T-cell (primary cell): ENCODE measurements at regions of chr14 and their contacts with region 1.

Region 1: DNA sequence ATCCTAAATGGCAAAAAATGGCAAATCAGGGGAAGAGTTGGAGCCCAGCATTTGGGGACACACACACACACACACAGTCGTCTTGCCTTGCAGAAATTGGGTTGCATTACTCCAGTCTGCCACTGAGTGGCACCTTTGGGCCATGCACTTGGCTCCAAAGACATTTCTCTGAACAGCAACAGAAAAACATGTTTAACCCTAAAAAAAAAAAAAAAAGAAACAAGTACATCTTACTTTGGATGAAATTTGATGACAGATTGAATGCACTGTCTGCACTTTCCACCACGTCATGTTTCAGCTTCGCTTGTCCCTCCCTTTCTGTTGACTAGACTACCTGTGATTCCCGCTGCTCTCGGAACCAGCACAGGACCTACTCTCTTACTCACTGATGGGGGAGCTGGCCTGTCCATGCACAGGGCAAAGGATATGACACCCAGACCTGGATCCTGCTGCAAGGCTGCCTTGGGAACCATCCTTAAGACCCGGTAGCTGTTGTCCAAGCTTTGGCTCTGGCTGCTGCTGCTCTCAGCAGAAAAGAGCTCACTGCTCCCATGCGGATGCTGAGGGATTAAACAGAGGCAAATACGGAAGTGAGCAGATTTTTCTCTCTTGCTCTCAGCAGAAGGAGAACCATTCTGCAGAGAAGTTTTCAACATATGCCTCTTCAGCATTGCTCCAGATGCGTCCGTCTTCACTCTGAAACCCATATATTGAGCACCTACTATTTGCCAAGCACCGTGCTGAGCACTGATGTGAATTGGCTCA is 376.8 kb downstream of the DPF3 start:
- DNase-seq: peak; percentile 38 to 86 (median 64)
- ATAC-seq: peak; percentile 35 to 65 (median 41)
- H3K4me3 ChIP-seq: no peak overlapping the region
- H3K4me3 Mint-ChIP-seq: peak overlapping the region in 1 of 3 donors; percentile 64
- H3K27ac ChIP-seq: no peak overlapping the region
- H3K27ac Mint-ChIP-seq: peak overlapping the region in 1 of 2 donors; percentile 47
- H3K4me1 ChIP-seq: peaks cover 29 to 37% of the 10 kb centered on the region in 2 experiments
- H3K4me1 Mint-ChIP-seq: peaks cover 34 to 56% (median 40%) of the 10 kb centered on the region in 3 donors
- H3K27me3 ChIP-seq: peaks cover 0 to 15% of the 10 kb centered on the region in 2 experiments
- H3K27me3 Mint-ChIP-seq: peaks cover 0 to 4% of the 10 kb centered on the region in 2 donors

Region 2: DNA sequence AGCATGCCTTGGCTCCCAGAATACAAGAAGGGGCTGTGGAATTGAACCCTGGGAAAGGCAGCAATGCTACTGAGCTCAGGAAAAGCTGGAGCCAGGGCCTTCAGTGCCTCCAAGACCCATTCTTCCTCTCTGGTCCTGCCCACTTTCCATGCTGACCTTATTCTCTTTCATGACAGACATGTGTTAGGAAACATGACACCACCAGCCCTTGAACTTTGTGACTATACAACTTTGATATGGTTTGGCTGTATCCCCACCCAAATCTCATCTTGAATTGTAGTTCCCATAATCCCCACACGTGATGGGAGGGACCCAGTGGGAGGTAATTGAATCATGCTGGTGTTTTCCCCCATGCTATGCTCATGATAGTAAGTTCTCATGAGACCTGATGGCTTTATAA is 31.4 kb before region 1 on chr14:
- CTCF ChIA-PET with region 1: no interaction called
- POLR2A ChIA-PET with region 1: no interaction called
- DNase-seq: no peak
- ATAC-seq: no peak
- H3K4me3 ChIP-seq: no peak overlapping the region
- H3K4me3 Mint-ChIP-seq: no peak overlapping the region
- H3K27ac ChIP-seq: no peak overlapping the region
- H3K27ac Mint-ChIP-seq: no peak overlapping the region
- H3K4me1 ChIP-seq: peaks cover 8 to 9% of the 10 kb centered on the region in 2 experiments
- H3K4me1 Mint-ChIP-seq: peaks cover 9 to 10% (median 9%) of the 10 kb centered on the region in 3 donors
- H3K27me3 ChIP-seq: peaks cover 0 to 5% of the 10 kb centered on the region in 2 experiments
- H3K27me3 Mint-ChIP-seq: peaks cover 0 to 2% of the 10 kb centered on the region in 2 donors

Region 3: GRCh38 chr14:72503696-72504368 is 13.3 kb before region 1 on chr14:
- CTCF ChIA-PET with region 1: no interaction called
- POLR2A ChIA-PET with region 1: no interaction called
- DNase-seq: no peak
- ATAC-seq: no peak
- H3K4me3 ChIP-seq: no peak overlapping the region
- H3K4me3 Mint-ChIP-seq: no peak overlapping the region
- H3K27ac ChIP-seq: no peak overlapping the region
- H3K27ac Mint-ChIP-seq: no peak overlapping the region
- H3K4me1 ChIP-seq: no peaks in the 10 kb centered on the region
- H3K4me1 Mint-ChIP-seq: no peaks in the 10 kb centered on the region
- H3K27me3 ChIP-seq: no peaks in the 10 kb centered on the region
- H3K27me3 Mint-ChIP-seq: peaks cover 3 to 7% of the 10 kb centered on the region in 2 donors

Region 4: DNA sequence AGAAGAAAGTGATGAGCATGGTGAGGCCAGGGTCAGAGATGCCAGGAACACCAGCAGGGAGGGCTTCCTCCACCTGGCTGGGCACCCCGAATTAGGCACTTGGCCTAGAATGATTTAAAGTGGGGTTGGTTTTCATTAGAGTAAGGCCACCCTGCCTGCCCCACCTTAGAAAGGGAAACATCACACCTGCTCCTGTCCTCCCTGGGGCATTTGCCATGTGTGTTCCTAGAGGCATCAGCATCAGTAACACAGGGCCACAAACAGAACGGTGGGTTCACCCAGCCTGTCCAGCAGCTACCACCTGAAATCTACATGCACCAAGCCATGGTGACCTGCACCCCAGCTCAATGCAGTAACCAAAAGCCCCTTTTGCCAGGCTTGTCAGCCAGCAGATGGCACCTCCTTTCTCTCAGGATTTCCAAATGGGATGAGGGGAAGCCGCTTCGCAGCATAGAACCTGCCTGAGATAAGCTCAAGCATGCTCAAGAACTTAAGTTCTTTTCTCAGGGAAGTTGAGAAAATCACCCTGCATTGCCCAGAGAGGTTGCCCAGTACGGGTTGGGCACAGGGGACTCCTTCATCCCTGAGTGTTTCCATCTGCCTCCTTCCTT is 38.0 kb after region 1 on chr14:
- CTCF ChIA-PET with region 1: interaction called in 1 of 2 experiments, 12 read pairs
- POLR2A ChIA-PET with region 1: no interaction called
- DNase-seq: no peak
- ATAC-seq: no peak
- H3K4me3 ChIP-seq: no peak overlapping the region
- H3K4me3 Mint-ChIP-seq: no peak overlapping the region
- H3K27ac ChIP-seq: no peak overlapping the region
- H3K27ac Mint-ChIP-seq: no peak overlapping the region
- H3K4me1 ChIP-seq: no peaks in the 10 kb centered on the region
- H3K4me1 Mint-ChIP-seq: peaks cover 0 to 6% (median 4%) of the 10 kb centered on the region in 3 donors
- H3K27me3 ChIP-seq: peaks cover 0 to 43% of the 10 kb centered on the region in 2 experiments
- H3K27me3 Mint-ChIP-seq: peaks cover 4 to 16% of the 10 kb centered on the region in 2 donors

Region 5: DNA sequence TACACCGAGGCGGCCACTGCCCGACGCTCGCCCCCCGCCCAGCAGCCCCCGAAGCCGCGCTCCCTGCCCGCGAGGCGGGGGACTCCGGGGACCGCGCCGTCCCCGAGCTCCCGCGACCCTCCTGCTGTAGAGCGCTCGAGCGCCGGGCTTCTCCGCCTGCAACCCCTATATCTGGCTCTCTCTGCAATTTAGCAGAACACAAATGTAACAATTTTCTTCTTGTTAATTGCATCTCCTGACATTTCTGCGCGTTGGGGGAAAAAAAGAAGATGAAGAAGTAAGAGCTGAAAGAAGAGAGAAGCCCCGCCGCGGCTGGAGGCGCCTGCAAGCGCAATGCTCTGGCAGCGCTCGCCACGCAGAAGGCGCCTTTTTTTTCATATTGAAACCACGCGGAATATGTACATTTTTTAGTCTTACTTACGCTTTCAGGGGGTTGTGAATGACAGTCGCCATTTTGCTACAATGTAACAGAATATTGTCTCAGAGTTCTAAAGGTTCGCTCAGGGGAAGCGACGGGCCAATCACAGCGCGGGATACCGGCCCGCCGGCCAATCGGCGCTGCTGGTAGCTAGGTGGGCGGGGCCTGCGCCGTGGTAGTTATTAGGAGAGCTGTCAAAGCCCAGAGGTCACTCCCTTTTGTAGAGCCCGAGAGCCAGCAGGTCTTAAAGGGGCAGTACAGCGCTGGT is 376.7 kb after region 1 on chr14 and contains the start of gene DPF3:
- CTCF ChIA-PET with region 1: interaction called, 7 to 10 read pairs
- POLR2A ChIA-PET with region 1: no interaction called
- DNase-seq: peak; percentile 77 to 93 (median 87)
- ATAC-seq: peak; percentile 97 to 98 (median 97)
- H3K4me3 ChIP-seq: peak within 1 kb of the TSS; percentile 74 to 96
- H3K4me3 Mint-ChIP-seq: peak within 1 kb of the TSS; percentile 86 to 98 (median 90)
- H3K27ac ChIP-seq: no peak within 1 kb of the TSS
- H3K27ac Mint-ChIP-seq: peak within 1 kb of the TSS; percentile 23 to 89
- H3K4me1 ChIP-seq: peaks cover 7 to 30% of the 10 kb centered on the region in 2 experiments
- H3K4me1 Mint-ChIP-seq: peaks cover 23 to 29% (median 26%) of the 10 kb centered on the region in 3 donors
- H3K27me3 ChIP-seq: peaks cover 9 to 52% of the 10 kb centered on the region in 2 experiments
- H3K27me3 Mint-ChIP-seq: peaks cover 20 to 46% of the 10 kb centered on the region in 2 donors
- total RNA-seq, gene DPF3: 0.33 to 0.86 (median 0.54) TPM

Region 6: DNA sequence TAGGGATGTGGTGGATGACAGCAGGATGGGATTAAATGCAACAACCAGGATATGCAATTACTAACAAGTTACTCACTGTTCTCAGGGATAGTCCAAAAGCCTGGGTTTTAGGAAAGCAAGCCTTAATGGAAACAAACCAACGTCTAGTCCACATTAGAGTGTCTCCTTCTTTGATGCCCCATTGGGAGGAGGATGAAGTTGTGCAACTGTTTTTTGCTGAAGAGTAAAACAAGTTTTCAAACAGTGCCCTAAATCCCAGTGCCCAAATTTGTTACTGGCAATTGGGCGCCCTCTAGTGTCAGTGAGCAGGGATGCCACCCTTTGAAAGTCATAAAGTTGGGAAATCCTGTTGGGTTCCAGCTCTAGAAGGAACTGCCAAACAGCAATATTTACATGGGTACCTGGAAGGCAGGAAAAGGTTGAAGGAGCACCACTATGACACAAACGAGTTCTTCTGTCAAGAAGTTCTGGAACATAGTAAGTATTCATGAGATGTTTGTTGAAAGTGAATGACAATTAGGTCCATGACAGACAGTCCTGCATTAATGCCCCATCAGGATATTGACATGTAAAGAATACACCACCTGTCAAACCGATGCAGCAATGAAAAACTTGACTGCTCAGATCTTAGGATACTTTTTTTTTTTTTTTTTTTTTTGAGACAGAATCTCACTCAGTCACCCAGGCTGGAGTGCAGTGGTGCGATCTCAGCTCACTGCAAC is 387.9 kb after region 1 on chr14:
- CTCF ChIA-PET with region 1: interaction called, 46 to 71 read pairs
- POLR2A ChIA-PET with region 1: no interaction called
- DNase-seq: peak in 33 of 35 experiments; percentile 30 to 82 (median 52)
- ATAC-seq: peak; percentile 68 to 88 (median 74)
- H3K4me3 ChIP-seq: no peak overlapping the region
- H3K4me3 Mint-ChIP-seq: no peak overlapping the region
- H3K27ac ChIP-seq: no peak overlapping the region
- H3K27ac Mint-ChIP-seq: no peak overlapping the region
- H3K4me1 ChIP-seq: no peaks in the 10 kb centered on the region
- H3K4me1 Mint-ChIP-seq: peaks cover 0 to 6% (median 2%) of the 10 kb centered on the region in 3 donors
- H3K27me3 ChIP-seq: peaks cover 0 to 13% of the 10 kb centered on the region in 2 experiments
- H3K27me3 Mint-ChIP-seq: peaks cover 10 to 11% of the 10 kb centered on the region in 2 donors

Region 7: GRCh38 chr14:72948481-72949138 is 431.5 kb after region 1 on chr14:
- CTCF ChIA-PET with region 1: interaction called, 11 to 15 read pairs
- POLR2A ChIA-PET with region 1: no interaction called
- DNase-seq: peak in 32 of 35 experiments; percentile 9 to 73 (median 52)
- ATAC-seq: peak in 2 of 4 experiments; percentile 36 to 50
- H3K4me3 ChIP-seq: no peak overlapping the region
- H3K4me3 Mint-ChIP-seq: no peak overlapping the region
- H3K27ac ChIP-seq: no peak overlapping the region
- H3K27ac Mint-ChIP-seq: no peak overlapping the region
- H3K4me1 ChIP-seq: no peaks in the 10 kb centered on the region
- H3K4me1 Mint-ChIP-seq: no peaks in the 10 kb centered on the region
- H3K27me3 ChIP-seq: no peaks in the 10 kb centered on the region
- H3K27me3 Mint-ChIP-seq: no peaks in the 10 kb centered on the region